ENCODE measurements at regions of chr19 and their contacts with region 1.

Region 1: GRCh38 chr19:4352701-4353121 is 9.3 kb downstream of the MPND start:
- DNase-seq: no peak
- H3K4me3 ChIP-seq: no peak overlapping the region
- H3K27me3 ChIP-seq: no peaks in the 10 kb centered on the region
- CTCF ChIP-seq: peak; percentile 92

Region 2: DNA sequence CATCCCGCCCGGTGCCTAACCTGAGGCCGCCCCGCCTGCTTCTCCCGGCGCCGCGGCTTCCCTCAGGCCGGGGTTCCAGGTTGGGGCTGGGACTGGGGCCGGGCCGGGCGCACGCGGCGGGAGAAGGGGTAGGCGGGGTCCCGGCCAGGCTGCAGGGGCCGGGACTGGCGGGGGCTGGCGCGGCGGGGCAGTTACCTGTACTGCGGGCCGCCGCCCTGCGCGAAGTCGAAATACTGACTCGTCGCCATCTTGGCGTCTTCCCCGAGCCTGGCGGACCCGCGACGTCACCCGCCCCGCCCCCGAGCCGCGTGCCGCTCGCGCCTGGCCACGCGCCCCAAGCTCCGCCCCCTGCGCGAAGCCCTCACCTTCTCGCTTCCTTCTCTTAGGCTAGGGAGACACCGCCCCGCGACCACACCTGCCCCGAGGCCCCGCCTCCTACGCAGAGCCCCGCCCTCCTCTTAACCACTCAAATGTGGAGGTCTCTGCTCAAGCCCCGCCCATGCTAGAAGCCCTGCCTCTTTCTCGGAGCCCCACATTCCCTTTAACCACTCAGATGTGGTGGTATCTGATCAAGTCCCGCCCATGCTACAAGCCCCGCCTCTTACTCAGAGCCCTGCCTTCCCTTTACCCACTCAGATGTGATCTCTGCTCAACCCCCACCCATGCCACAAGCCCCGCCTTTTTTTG is 483.8 kb before region 1 on chr19 and contains the start of gene ZFR2:
- CTCF ChIA-PET with region 1: no interaction called
- POLR2A ChIA-PET with region 1: no interaction called
- DNase-seq: no peak
- H3K4me3 ChIP-seq: no peak within 1 kb of the TSS
- H3K27me3 ChIP-seq: peaks cover 18% of the 10 kb centered on the region
- CTCF ChIP-seq: no peak
- polyA plus RNA-seq, gene ZFR2: 0.15 TPM in 1 of 2 replicates, not detected in the other

Region 3: GRCh38 chr19:4267101-4267900 is 85.4 kb before region 1 on chr19:
- CTCF ChIA-PET with region 1: interaction called, 31 read pairs
- POLR2A ChIA-PET with region 1: no interaction called
- DNase-seq: no peak
- H3K4me3 ChIP-seq: no peak overlapping the region
- H3K27me3 ChIP-seq: no peaks in the 10 kb centered on the region
- CTCF ChIP-seq: peak; percentile 88

Region 4: DNA sequence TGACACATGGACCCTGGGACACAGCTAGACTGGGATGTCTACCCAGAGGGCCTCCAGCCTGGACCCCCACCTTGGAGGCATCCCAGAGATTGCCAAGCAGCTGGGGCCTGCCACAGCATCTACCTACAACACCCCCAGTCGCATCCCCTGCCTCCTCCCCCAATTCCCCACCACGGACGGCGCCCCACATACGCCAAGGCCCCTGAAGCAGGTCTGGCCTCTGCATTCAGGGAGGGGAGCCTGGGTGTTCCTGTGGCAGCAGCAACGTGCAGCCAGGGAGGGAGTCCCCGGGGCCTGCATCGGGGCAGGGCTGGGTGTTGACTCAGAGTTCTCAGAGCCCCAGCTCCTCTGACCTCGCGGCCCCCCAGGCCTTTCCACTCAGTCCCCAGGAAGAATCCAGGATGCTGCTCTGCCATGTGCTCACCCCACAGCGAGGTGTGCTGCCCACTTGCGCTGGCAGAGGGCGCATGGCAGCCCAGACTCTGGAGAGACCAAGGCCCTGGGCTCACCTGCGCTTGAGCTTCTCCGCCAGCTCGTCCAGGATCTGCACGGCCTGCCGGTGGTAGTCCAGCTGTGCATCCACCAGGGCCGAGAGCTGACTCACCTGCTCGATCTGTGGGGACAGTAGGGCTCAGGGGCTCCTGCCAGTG is 10.3 kb after region 1 on chr19:
- CTCF ChIA-PET with region 1: interaction called, 49 read pairs
- POLR2A ChIA-PET with region 1: no interaction called
- DNase-seq: no peak
- H3K4me3 ChIP-seq: no peak overlapping the region
- H3K27me3 ChIP-seq: no peaks in the 10 kb centered on the region
- CTCF ChIP-seq: peak; percentile 19

Region 5: GRCh38 chr19:4375164-4376027 is 22.7 kb after region 1 on chr19:
- CTCF ChIA-PET with region 1: interaction called, 11 read pairs
- POLR2A ChIA-PET with region 1: no interaction called
- DNase-seq: no peak
- H3K4me3 ChIP-seq: no peak overlapping the region
- H3K27me3 ChIP-seq: no peaks in the 10 kb centered on the region
- CTCF ChIP-seq: peak; percentile 56

Region 6: GRCh38 chr19:4505897-4506744 is 153.4 kb after region 1 on chr19:
- CTCF ChIA-PET with region 1: no interaction called
- POLR2A ChIA-PET with region 1: interaction called, 15 read pairs
- DNase-seq: no peak
- H3K4me3 ChIP-seq: no peak overlapping the region
- H3K27me3 ChIP-seq: no peaks in the 10 kb centered on the region
- CTCF ChIP-seq: no peak

Region 7: GRCh38 chr19:4694209-4694987 is 341.7 kb after region 1 on chr19:
- CTCF ChIA-PET with region 1: no interaction called
- POLR2A ChIA-PET with region 1: no interaction called
- DNase-seq: peak; percentile 75
- H3K4me3 ChIP-seq: no peak overlapping the region
- H3K27me3 ChIP-seq: no peaks in the 10 kb centered on the region
- CTCF ChIP-seq: no peak

Measured in BJ (cell line).